Left cardiac atrium (tissue), 4 donors: ENCODE measurements at regions of chr10 and their contacts with region 1.

Region 1: DNA sequence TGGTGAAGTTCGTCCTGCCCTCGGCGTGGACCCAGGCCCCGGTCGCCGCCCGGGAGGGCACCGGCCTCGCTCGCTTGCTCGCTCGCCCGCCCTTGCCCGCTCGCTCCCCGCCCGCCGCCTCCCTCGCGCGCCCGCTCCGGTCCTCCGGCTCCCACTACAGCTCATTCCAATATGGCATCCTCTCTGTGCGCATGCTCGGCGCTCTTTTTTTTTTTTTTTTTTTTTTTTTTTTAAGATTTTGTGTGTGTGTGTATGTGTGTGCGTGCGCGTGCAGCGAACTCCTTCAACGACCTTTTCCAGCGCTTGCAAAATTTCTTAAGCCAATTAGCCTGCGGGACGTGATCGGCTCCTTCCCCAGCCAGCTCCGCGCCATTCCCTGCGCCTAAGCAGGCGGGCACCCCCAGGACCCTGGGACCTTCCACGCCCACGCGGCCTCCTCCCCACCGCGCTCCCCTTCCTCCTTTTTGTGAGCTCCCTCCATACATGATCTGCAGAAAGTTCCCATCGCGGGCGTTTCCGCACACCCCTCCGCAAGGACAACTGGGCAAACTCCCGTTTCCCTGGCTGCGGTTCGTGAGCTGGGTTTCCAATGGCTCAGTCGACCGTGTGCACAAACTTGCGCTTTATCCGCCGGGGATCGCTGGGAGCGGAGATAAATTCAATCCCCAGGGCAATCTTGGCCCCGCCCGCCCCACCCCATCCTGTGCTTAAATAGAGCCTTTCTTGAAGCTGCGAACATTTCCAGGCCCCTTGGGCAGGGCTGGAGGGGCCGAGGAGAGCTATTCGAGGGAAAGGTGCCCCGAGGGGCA is at the start of gene SFMBT2:
- DNase-seq: peak; percentile 65
- ATAC-seq: peak; percentile 67 to 79
- total RNA-seq, gene SFMBT2: 9.9 to 11.4 TPM

Region 2: DNA sequence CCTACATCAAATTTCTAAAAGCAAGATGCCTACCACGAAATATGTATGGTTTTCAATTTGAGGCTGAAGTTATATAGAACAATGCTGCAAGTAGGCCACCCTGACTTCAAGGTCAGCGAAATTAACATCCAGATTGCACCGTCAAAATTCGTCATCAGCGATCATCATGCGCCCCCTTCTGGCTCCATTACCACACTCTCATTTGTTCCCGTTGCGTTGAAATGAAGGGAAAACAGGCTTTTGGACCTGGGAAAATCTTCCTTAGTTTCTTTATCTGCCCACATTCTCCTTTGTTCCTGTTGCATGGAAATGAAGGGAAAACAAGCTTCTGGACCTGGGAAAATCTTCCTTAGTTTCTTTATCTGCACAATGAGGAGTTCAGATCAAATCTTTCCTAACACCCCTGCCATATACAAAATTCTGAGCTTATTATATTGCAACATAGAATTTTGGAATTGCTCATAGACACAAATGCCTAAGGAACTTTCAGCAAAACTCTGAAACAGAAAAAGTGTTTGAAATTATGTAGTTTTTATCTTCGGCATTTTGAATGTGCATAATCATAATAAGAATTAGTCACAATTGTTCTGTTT is 732.8 kb before region 1 on chr10:
- intact Hi-C with region 1: loop called in 1 of 2 experiments (anchors 10 kb)
- DNase-seq: peak; percentile 49
- ATAC-seq: peak in 1 of 2 donors; percentile 54

Region 3: GRCh38 chr10:7121154-7121810 is 289.8 kb before region 1 on chr10:
- intact Hi-C with region 1: loop called (anchors 5 kb)
- DNase-seq: peak; percentile 57
- ATAC-seq: peak; percentile 63 to 70

Region 4: GRCh38 chr10:7205656-7206055 is 205.4 kb before region 1 on chr10:
- intact Hi-C with region 1: loop called in 1 of 2 experiments (anchors 5 kb)
- DNase-seq: peak; percentile 30
- ATAC-seq: peak; percentile 78 to 87

Region 5: GRCh38 chr10:7260412-7260900 is 150.6 kb before region 1 on chr10:
- intact Hi-C with region 1: loop called (anchors 2 to 5 kb)
- DNase-seq: peak; percentile 76
- ATAC-seq: peak; percentile 93 to 96

Region 6: GRCh38 chr10:7337431-7338171 is 73.5 kb before region 1 on chr10:
- intact Hi-C with region 1: loop called in 1 of 2 experiments (anchors 10 kb)
- DNase-seq: no peak
- ATAC-seq: no peak